Panc1 (cell line): ENCODE measurements at regions of chr15 and their contacts with region 1.

Region 1: DNA sequence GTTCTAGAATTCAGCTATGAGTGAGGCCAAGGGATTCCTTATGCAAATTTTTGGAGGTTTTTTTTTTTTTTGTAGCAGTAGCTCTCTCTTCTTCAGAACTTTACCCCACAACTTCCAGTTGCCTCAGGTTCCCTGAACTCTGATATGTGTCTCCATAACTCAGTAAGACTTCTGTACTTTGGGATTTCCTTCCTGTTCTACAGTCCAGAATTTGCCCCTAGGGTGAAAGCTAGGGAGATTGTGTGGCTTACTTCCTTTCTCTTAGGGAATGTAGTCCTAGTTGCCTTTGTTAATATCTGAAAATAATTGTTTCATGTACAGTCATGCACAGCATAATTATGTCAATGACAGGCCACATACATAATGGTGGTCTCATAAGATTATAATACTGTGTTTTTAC is 30.8 kb downstream of the LRRC28 start:
- DNase-seq: no peak
- ATAC-seq: no peak
- H3K4me3 ChIP-seq: no peak overlapping the region
- H3K27ac ChIP-seq: no peak overlapping the region
- H3K4me1 ChIP-seq: no peaks in the 10 kb centered on the region
- H3K27me3 ChIP-seq: no peaks in the 10 kb centered on the region
- CTCF ChIP-seq: no peak

Region 2: GRCh38 chr15:99755692-99756409 is 473.7 kb after region 1 on chr15:
- CTCF ChIA-PET with region 1: no interaction called
- POLR2A ChIA-PET with region 1: no interaction called
- in situ Hi-C with region 1: no loop called
- intact Hi-C with region 1: loop called (anchors 2 kb)
- DNase-seq: peak; percentile 54
- ATAC-seq: peak; percentile 93
- H3K4me3 ChIP-seq: no peak overlapping the region
- H3K27ac ChIP-seq: no peak overlapping the region
- H3K4me1 ChIP-seq: no peaks in the 10 kb centered on the region
- H3K27me3 ChIP-seq: no peaks in the 10 kb centered on the region
- CTCF ChIP-seq: peak; percentile 91

Region 3: GRCh38 chr15:99928429-99928981 is 646.4 kb after region 1 on chr15:
- CTCF ChIA-PET with region 1: no interaction called
- POLR2A ChIA-PET with region 1: no interaction called
- in situ Hi-C with region 1: no loop called
- intact Hi-C with region 1: no loop called
- DNase-seq: no peak
- ATAC-seq: peak; percentile 95
- H3K4me3 ChIP-seq: peak overlapping the region; percentile 43 to 67
- H3K27ac ChIP-seq: peak overlapping the region; percentile 63; the same call in 1 of the 2 replicates
- H3K4me1 ChIP-seq: peaks cover 3% of the 10 kb centered on the region; the same call in 1 of the 2 replicates
- H3K27me3 ChIP-seq: peaks cover 4% of the 10 kb centered on the region; the same call in 1 of the 2 replicates
- CTCF ChIP-seq: peak; percentile 76